ENCODE measurements at regions of chr5 and their contacts with region 1.

Region 1: GRCh38 chr5:143248822-143249579 is 154.5 kb downstream of the NR3C1 start:
- DNase-seq: no peak
- CTCF ChIP-seq: no peak

Region 2: DNA sequence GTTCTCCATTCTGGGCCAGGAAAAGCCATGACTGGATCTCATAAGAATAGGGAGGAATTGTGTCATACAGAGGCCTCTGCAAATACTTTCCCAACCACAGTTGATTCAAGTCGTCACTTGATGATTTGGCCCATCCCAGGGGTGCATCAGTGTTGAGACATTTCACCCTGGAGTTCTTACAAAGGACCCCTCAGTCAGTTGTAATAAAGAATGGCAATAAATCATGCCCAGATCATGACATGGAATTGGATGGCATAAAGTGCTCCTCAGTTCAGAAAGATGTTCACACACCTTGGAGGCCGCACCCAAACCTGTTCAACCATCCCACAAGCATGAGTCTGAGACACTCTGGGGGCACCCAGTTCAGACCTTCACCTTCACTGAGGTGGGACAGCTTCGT is 13.6 kb before region 1 on chr5:
- CTCF ChIA-PET with region 1: interaction called, 26 read pairs
- POLR2A ChIA-PET with region 1: no interaction called
- DNase-seq: no peak
- CTCF ChIP-seq: no peak

Measured in GM10248 (cell line).